Head of caudate nucleus (tissue), 42 donors: ENCODE measurements at regions of chr2 and their contacts with region 1.

Region 1: GRCh38 chr2:218269899-218270720 is at the starts of genes AAMP and PNKD:
- DNase-seq: peak; percentile 99 to 100 (median 100)

Region 2: DNA sequence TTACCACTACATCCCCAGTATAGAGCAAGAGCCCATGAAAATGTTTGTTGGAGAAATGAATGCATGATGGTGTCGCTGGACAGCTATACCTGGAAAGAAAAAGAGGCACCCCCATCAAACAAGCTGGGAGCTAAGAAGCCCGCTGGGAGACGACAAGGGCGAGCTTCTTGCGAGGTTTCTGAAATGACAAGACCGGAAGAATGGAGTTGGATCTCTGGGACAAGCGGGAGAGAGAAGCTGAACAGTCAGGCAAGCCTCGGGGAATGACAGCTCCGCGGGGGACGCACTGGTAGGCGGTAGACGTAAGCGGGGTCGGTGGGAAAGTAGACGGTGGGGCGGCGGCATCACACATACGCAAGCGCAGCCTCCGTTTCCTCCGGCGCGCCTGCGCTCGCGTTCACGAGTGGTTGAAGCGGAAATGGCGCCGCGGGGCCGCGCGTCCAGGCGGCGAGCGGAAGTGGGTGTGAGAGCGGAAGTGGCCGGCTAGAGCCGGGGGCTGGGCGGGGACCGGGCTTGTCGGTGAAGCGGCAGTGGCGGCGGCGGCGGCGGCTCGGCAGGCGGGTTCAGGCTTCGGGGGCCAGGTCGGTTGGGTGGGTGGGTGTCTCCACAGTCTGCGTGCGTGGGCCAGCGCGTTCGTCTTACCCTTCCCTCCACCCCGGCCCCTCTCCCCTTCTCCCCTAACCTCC is 53.3 kb before region 1 on chr2 and contains the start of gene ARPC2:
- intact Hi-C with region 1: loop called (anchors 2 kb)
- DNase-seq: peak; percentile 83 to 97 (median 92)

Region 3: GRCh38 chr2:218301176-218301819 is 31.2 kb after region 1 on chr2:
- intact Hi-C with region 1: no loop called
- DNase-seq: peak; percentile 47 to 95 (median 85)

Region 4: DNA sequence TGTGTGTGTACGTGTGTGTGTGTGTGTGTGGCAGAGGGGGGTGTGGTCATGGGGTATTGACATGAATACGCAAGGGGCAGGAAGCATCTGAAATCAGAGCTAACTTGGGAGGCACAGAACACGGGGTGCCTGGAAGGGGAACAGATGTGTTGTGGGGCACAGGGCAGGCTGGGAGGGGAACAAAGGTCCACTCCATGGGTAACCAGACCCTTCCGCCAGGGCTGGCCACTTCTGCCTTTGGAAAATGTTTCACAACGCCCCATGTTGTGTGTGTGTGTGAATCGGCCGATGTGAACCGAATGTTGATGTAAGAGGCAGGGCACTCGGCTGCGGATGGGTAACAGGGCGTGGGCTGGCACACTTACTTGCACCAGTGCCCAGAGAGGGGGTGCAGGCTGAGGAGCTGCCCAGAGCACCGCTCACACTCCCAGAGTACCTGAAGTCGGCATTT is 111.8 kb after region 1 on chr2 and contains the start of gene SLC11A1:
- intact Hi-C with region 1: no loop called
- DNase-seq: peak in 25 of 42 donors; percentile 32 to 82 (median 53)